Cardiac septum (tissue), 1 donor: ENCODE measurements at regions of chr4 and their contacts with region 1.

Region 1: DNA sequence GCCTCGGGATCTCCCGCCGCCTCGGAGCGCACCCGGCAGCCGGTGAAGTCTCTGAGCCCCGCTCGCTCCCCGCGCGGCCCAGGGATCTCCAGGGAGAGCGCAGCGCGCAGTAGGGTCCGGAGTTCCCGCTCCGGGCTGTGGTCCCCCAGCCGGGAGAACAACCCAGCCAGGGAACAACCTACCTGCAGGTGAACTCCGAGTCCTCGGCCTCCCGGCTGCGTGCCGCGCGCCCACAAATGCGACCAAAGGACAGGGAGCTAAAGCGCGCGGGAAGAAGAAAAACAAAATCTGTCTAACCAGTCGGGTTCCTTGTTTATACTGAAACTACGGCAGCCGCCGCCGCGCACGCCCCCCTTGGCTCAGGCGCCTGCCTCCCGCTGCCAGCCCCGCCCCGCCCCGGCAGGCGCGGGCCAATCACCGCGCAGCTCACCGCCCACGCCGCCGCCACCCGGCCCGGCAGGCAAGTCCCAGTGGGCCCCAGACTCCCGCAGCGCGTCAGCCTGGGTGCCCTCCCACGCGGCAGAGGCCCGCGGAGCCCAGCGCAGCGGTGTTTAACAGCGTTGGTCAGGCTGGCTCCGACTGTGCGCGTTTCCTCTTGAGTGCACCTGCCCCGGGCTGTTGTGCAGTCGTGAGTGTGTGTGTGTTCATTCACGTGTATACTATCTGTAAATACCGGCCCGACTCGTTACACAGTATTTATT is at the start of gene RASGEF1B:
- DNase-seq: peak; percentile 93
- total RNA-seq, gene RASGEF1B: 2.4 TPM

Region 2: DNA sequence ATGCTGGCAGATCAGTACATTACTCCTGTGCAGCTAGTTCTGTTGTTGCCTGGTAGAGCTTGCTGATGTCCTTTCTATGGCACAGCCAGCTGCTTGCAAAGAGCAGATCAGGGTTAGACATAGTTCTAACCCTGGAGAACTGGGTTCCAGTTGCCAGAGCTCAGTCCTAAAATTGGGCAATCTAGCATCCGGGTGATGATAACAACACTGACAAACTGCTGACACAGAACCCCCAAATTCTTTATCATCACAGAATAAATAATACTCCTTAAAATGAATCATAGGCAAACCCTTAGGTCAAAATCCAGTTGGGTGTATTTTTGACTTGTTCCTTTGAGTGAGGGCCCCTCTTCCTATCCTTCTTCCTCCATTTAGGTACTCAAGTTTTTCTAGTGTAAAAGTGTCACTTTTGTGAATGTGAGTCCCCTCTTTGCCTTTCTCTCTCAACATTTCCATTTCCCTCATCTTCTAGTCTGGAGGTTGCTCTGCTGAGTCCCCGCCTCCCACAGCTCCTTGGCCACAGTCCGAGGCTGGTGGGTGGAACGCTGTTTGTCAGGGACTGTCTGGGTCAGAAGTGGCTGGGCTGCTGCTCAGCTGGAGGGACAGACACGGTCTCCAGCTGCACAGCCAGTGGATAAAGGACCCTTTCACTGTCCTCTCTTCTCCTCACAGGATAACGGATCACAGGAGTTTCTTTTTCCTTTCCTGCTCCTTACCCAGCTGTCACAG is 93.6 kb after region 1 on chr4:
- intact Hi-C with region 1: loop called (anchors 5 kb)
- DNase-seq: peak; percentile 91

Region 3: DNA sequence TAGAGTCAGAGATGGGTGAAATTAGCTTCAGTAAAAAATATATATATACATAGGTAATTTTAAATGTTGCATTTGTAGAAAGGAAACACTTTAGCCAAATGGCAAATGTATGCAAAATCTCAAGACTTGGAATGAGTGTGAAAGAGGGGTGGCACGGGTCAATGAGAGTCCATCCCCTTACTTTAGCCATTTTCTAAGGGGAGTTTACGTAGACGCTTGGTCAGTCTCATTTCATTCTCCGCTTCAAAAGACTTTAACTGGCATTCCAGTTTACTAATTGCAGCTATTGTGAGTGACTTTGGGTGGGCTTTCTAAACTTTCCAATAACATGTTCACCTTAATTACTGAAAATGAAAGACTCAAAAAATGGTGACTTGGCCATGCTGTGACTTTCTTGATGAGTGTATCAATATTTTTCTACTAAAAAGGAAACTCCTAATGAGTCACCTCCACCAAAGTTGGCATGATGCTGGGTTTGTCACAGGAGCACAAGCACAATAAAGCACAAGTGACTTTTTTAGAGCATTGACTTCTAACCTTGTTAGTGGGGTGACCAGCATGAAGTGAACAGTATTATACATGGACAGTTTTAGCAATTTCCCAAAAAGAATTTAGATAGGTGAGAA is 356.0 kb after region 1 on chr4:
- intact Hi-C with region 1: loop called (anchors 5 kb)
- DNase-seq: no peak

Region 4: DNA sequence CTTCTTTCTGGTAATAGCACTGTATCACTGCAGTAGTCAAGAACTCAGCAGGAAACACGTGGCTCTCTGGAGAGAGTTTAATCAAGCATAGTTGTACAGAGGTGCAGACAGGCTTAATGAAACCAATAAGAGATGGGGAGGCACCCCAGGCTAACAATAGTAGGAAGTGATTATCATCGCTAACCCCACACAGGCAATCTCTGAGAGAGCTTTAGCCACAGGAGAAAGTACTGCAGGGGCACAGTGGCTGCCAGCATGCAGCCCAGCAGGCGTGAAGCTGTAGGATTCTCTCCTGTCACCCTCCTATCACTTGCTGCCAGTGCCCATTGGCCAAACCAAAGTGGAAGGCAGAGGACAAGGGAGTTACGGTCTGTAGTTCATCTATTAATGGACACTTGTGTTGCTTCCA is 450.0 kb after region 1 on chr4:
- intact Hi-C with region 1: loop called (anchors 5 kb)
- DNase-seq: no peak

Region 5: DNA sequence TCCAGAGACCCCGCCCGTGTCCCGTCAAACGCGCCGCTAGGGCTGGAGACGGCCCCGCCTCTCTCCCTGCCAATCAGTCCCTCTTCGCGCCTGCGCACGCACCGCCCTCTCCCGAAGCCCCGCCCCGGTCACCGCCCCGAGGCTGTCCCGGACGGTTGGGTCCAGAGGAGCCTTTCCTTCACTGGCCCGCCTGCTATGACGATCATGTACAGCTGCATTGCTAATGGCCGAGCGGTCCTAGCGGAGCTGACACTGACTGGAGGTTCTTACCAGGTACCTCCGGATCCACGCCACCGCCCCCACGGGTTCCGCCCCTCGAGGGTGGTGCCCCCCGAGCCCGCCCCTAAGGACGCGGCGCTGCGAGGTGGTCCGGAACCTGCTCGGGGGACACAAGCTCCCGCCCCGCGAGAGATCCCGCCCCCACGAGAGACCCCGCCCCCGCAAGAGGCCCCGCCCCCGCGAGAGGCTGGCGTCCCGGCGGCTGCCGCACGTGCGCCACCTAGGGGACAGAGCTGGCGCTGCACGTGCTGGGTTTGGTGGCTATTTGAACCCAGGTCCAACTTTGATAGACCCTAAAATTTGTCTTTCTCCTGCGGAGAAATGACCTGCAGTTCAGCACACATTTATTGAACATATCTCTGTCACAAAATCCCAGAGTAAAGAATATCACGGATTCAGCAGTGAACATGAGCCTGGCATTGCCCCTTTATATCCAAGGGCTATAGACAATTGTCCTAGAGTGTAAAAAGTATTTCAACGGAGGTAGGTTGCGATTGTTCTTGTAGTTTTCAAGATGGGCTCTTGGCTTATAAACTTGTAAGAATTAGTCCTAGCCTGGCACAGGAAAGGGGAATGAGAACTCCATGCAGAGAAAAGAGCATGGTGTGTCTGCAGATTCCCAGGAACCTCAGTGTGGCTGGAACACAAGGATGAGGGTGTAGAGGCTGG is 813.4 kb after region 1 on chr4:
- intact Hi-C with region 1: loop called (anchors 10 kb)
- DNase-seq: peak; percentile 100